ENCODE measurements at regions of chr16 and their contacts with region 1.

Region 1: DNA sequence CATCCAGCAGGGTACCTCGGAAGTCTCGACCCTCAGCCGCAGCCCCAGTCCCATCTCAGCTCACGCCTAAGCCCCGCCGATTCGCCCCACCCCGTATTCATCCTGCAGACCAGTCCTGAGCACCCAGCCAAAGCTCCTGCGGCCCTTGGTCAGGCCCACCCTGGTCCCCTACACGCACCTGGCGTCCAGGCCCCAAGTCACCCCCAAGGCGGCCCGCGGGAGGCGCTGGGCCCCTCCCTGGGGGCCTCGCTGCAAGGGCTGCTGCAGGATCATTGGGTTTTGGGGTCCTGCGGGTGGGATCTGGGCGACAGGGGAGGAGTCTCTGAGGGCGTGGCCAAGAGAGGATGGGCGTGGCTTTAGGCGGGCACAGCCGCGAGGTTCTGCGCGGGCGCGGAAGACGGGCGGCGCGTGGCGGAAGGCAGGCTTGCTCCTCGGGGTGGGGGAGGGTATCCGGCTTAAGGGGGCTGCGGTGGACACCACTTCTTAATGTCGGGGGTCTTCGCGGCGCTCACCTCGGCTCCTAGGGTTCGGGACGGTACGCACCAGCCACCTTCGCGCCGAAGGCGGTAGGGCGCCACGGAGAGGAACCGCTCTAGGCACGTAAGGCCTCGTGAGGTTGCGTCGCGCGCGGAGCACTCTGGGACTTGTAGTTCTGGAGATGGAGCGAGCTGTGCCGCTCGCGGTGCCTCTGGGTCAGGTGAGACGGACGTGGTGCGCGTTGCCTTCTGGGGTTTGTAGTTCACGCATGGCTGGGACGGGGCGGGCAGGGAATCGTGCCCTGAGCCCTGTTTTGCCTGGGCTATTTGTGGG is at the starts of genes HCFC1R1 and THOC6:
- DNase-seq: peak; percentile 99
- ATAC-seq: peak; percentile 76
- H3K4me3 ChIP-seq: peak within 1 kb of the TSS; percentile 43 to 79 (median 71)
- H3K4me3 Mint-ChIP-seq: peak within 1 kb of the TSS; percentile 97
- H3K27ac ChIP-seq: peak within 1 kb of the TSS; percentile 83 to 94
- H3K27ac Mint-ChIP-seq: peak within 1 kb of the TSS; percentile 99
- H3K4me1 ChIP-seq: peaks cover 44 to 60% of the 10 kb centered on the region in 2 donors
- H3K4me1 Mint-ChIP-seq: peaks cover 47% of the 10 kb centered on the region
- H3K27me3 ChIP-seq: peaks cover 0 to 5% (median 2%) of the 10 kb centered on the region in 4 experiments
- H3K27me3 Mint-ChIP-seq: peaks cover 1% of the 10 kb centered on the region
- CTCF ChIP-seq: no peak
- total RNA-seq, gene HCFC1R1: 17.9 and 19.1 TPM in 2 replicates
- total RNA-seq, gene THOC6: 25.3 and 28.5 TPM in 2 replicates

Region 2: DNA sequence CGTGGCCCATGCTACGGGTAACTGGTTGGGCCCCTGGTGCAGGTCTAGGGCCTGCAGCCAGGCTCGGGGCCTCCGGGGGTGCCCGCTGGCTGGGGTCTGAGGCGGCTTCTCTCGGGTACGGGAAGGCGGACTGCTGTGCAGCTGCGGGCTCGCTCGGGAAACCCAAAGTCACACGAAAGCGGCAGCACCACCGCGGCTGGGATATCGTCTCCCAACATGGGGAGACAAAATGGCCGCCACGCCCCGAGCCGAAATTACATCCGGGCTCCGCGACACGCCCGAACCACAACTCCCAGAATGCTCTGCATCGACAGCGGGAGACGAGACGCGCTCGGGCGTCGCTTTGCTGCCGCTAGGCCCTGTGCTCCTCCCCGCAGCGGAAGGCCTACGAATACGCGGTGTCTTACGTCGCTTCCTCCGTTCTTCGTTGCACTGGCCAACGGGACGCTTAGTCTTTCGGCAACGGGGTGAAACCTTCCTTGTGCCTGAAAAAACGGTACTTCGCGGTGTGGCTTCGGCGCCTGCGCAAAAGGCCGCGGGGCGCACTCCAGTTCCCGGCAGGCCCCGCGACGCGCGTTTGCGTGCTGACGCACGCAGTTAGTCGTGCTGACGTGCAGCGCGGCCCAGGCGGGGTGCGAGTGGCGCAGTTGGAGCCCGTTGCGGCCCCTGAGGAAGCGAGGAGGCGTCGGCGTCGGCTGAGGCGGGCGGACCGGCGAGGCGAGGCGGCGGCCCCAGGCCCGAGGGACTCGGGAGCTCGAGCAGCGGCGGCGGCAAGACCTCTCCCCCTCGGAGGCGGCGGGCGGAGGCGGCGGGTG is 271.6 kb before region 1 on chr16 and contains the start of gene SRRM2:
- CTCF ChIA-PET with region 1: no interaction called
- POLR2A ChIA-PET with region 1: no interaction called
- intact Hi-C with region 1: loop called (anchors 5 kb)
- DNase-seq: peak; percentile 100
- ATAC-seq: peak; percentile 83
- H3K4me3 ChIP-seq: peak within 1 kb of the TSS; percentile 68 to 97 (median 82)
- H3K4me3 Mint-ChIP-seq: peak within 1 kb of the TSS; percentile 95
- H3K27ac ChIP-seq: peak within 1 kb of the TSS; percentile 95 to 98
- H3K27ac Mint-ChIP-seq: peak within 1 kb of the TSS; percentile 99
- H3K4me1 ChIP-seq: peaks cover 36 to 45% of the 10 kb centered on the region in 2 donors
- H3K4me1 Mint-ChIP-seq: peaks cover 50% of the 10 kb centered on the region
- H3K27me3 ChIP-seq: no peaks in the 10 kb centered on the region
- H3K27me3 Mint-ChIP-seq: no peaks in the 10 kb centered on the region
- CTCF ChIP-seq: no peak
- total RNA-seq, gene SRRM2: 1,470 and 1,485 TPM in 2 replicates

Region 3: DNA sequence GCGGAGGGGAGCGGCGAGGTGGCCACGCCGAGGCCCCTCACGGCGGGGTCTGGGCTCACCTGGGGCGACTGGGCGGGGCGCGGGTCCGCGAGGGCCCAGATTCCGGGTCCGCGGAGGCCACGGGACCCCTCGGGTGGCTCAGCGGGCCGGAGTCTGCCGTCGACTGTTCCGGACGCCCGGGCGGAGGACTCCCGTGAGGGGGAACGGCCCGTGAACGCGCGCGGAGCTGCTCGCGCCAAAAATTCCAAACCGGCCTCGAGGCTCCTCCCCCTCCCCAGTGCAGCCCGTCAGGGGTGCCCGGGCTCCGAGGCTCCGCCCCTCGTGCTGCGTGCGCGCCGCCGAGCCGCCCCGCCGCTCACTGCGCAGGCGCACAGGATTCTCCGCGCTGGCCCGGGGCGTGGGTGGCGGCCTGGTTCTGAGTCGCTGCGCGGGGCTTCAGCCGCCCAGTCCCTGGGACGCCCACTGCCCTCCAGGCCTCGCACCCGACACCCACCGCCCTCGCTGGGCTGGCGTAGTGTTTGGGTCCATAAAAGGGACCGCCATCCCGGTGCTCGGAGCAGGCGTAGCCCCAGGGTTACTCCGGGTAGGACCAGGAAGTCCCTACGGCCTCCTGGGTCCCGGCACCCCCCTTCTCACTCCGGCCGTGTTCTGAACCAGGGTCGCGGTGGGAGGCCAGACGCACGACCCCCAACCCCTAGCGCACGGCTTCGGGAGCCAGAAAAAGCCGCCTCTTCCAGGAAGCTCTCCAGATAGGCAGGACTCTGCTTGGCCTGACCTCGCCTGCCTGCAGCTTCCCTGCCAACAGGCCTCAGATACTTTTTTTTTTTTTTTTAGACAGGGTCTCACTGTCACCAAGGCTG is 43.4 kb before region 1 on chr16 and contains the start of gene PKMYT1:
- CTCF ChIA-PET with region 1: interaction called, 8 read pairs
- POLR2A ChIA-PET with region 1: interaction called, 6 read pairs
- intact Hi-C with region 1: loop called (anchors 1 kb)
- DNase-seq: peak; percentile 96
- ATAC-seq: peak; percentile 93
- H3K4me3 ChIP-seq: peak within 1 kb of the TSS; percentile 57 to 96 (median 82)
- H3K4me3 Mint-ChIP-seq: peak within 1 kb of the TSS; percentile 81
- H3K27ac ChIP-seq: peak within 1 kb of the TSS; percentile 71 to 83
- H3K27ac Mint-ChIP-seq: peak within 1 kb of the TSS; percentile 84
- H3K4me1 ChIP-seq: peaks cover 18 to 39% of the 10 kb centered on the region in 2 donors
- H3K4me1 Mint-ChIP-seq: peaks cover 21% of the 10 kb centered on the region
- H3K27me3 ChIP-seq: peaks cover 0 to 8% (median 1%) of the 10 kb centered on the region in 4 experiments
- H3K27me3 Mint-ChIP-seq: no peaks in the 10 kb centered on the region
- CTCF ChIP-seq: no peak
- total RNA-seq, gene PKMYT1: 0.67 and 1.0 TPM in 2 replicates

Region 4: DNA sequence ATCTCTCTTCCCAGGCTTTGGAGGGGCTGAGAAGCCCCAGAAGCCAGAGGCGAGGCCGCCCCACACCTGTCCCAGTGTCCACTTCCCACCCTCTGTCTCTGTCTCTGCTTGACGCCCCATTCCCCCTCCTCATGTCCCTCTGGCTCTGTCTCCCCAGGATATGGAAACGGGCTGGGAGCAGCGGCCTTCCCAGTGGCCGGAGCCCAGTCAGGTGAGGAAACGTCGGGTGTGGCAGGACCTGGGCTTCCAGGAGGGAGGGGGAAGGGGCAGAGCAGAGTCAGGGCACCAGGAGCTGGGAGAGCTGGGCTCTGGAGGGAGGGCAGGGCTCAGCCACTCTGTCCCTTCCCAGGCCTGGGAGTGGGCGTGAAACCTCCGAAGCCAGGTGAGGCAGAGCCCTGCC is 33.0 kb before region 1 on chr16:
- CTCF ChIA-PET with region 1: no interaction called
- POLR2A ChIA-PET with region 1: no interaction called
- intact Hi-C with region 1: no loop called
- DNase-seq: no peak
- ATAC-seq: no peak
- H3K4me3 ChIP-seq: no peak overlapping the region
- H3K4me3 Mint-ChIP-seq: no peak overlapping the region
- H3K27ac ChIP-seq: no peak overlapping the region
- H3K27ac Mint-ChIP-seq: no peak overlapping the region
- H3K4me1 ChIP-seq: no peaks in the 10 kb centered on the region
- H3K4me1 Mint-ChIP-seq: no peaks in the 10 kb centered on the region
- H3K27me3 ChIP-seq: peaks cover 0 to 4% (median 0%) of the 10 kb centered on the region in 4 experiments
- H3K27me3 Mint-ChIP-seq: no peaks in the 10 kb centered on the region
- CTCF ChIP-seq: no peak

Region 5: DNA sequence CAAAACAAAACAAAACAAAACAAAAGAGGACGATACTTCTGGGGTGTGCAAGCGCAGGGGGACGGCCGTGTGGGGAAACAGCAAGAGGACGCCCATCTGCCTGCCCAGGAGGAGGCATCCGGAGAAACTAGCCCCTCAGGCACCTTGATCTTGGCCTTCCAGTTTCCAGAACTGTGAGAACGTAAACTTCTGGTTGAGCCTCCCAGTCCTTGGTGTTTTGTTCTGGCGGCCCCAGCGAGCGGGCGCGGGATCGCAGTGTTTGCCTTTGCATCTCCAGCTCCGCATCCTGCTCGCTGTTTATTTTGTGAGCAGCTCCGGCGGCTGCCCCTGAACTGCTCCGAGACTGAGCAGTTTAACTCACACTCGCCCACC is 21.5 kb after region 1 on chr16:
- CTCF ChIA-PET with region 1: interaction called, 14 read pairs
- POLR2A ChIA-PET with region 1: interaction called, 3 read pairs
- intact Hi-C with region 1: no loop called
- DNase-seq: peak; percentile 43
- ATAC-seq: peak; percentile 15
- H3K4me3 ChIP-seq: peak overlapping the region in 3 of 5 experiments; percentile 18 to 58 (median 53)
- H3K4me3 Mint-ChIP-seq: peak overlapping the region; percentile 81
- H3K27ac ChIP-seq: no peak overlapping the region
- H3K27ac Mint-ChIP-seq: no peak overlapping the region
- H3K4me1 ChIP-seq: peaks cover 21% of the 10 kb centered on the region in 2 donors
- H3K4me1 Mint-ChIP-seq: peaks cover 11% of the 10 kb centered on the region
- H3K27me3 ChIP-seq: peaks cover 0 to 68% (median 33%) of the 10 kb centered on the region in 4 experiments
- H3K27me3 Mint-ChIP-seq: peaks cover 31% of the 10 kb centered on the region
- CTCF ChIP-seq: no peak

Region 6: DNA sequence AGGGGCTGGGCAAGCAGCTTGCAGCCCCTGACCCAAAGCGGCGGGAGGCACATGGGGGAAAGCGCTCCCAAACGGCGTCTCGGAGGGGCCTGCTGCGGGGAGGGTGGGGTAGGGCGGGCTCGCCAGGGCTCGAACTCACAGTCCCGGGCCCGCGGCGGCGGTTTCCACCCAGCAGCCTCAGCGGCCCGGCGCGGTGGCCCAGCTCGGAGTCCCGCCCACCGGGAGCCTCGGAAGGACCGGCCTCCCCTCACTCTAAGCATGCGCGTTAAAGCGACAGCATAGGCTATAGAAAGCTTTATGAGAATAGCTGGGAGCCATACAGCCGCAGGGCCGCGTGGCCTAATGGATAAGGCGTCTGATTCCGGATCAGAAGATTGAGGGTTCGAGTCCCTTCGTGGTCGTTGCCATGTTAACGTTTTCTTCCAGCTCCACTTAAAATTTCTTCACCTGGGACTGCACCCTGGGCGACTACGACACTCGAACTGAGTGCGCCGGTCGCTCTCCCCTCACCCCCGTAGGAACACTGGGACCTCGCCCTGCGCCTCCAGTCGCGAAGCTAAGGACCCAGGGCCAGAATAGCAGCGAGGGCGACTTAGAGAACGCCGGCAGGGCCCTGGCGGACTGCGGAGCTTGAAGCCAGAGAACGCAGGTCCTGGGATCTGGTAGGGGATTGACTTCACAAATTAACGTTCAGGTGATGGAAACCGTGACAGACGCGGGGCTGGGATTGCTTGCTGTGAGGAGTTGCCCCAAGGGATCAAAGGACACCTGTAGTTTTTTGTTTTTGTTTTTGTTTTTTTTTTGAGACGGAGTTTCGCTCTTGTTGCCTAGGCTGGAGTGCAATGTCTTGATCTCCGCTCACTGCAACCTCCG is 126.7 kb after region 1 on chr16:
- CTCF ChIA-PET with region 1: interaction called, 5 read pairs
- POLR2A ChIA-PET with region 1: no interaction called
- intact Hi-C with region 1: loop called (anchors 5 kb)
- DNase-seq: peak; percentile 96
- ATAC-seq: peak; percentile 86
- H3K4me3 ChIP-seq: peak overlapping the region; percentile 58 to 87 (median 71)
- H3K4me3 Mint-ChIP-seq: peak overlapping the region; percentile 92
- H3K27ac ChIP-seq: peak overlapping the region; percentile 29 to 54
- H3K27ac Mint-ChIP-seq: peak overlapping the region; percentile 95
- H3K4me1 ChIP-seq: peaks cover 22 to 37% of the 10 kb centered on the region in 2 donors
- H3K4me1 Mint-ChIP-seq: peaks cover 28% of the 10 kb centered on the region
- H3K27me3 ChIP-seq: no peaks in the 10 kb centered on the region
- H3K27me3 Mint-ChIP-seq: no peaks in the 10 kb centered on the region
- CTCF ChIP-seq: no peak

Measured in B cell (primary cell).